Activated B cell treated with CpG ODN at 0.5 μM for 24 hours (primary cell): ENCODE measurements at regions of chr2 and their contacts with region 1.

Region 1: DNA sequence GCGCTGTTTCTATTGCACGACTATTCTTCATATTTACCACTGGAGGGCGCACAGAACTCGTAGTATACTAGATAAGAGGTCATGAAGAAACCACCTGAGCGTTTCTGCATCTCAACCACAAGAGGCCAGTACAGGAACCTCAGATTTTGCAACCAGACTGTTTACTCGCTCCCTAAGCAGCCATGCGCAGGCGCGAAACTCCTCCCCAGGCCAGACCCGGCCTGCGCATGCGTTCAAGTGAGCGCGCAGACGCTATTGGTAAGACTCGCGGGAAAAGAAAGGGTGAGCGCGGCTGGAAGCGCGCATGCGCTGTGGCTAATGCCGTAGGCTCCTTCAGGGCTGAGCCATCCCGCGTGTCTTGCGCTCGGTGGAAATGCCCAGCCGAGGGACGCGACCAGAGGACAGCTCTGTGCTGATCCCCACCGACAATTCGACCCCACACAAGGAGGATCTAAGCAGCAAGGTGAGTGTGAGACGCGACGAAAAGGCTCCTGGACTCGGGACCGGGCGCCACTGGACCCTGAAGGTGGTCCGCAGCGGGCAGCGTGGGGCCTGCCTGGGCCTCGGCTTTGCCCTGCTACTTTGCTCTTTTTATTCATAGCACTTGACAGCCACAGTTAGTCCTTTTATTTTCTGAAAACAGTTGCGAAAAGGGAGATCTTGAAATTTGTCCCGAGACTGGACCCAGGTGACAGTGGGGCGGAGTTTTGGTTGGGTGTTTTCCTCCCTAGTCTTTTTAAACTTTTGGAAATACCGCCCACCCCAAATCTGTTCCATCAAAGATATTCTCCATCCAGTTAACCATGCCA is at the start of gene ASNSD1:
- DNase-seq: peak; percentile 97
- ATAC-seq: peak; percentile 95
- H3K4me3 Mint-ChIP-seq: no peak within 1 kb of the TSS
- H3K27ac Mint-ChIP-seq: no peak within 1 kb of the TSS
- H3K4me1 Mint-ChIP-seq: peaks cover 25% of the 10 kb centered on the region
- H3K27me3 Mint-ChIP-seq: no peaks in the 10 kb centered on the region
- CTCF ChIP-seq: peak; percentile 97
- total RNA-seq, gene ASNSD1: 27.5 and 31.1 TPM in 2 replicates

Region 2: GRCh38 chr2:189199797-189200196 is 461.6 kb before region 1 on chr2:
- CTCF ChIA-PET with region 1: no interaction called
- POLR2A ChIA-PET with region 1: no interaction called
- intact Hi-C with region 1: no loop called
- DNase-seq: no peak
- ATAC-seq: no peak
- H3K4me3 Mint-ChIP-seq: no peak overlapping the region
- H3K27ac Mint-ChIP-seq: no peak overlapping the region
- H3K4me1 Mint-ChIP-seq: no peaks in the 10 kb centered on the region
- H3K27me3 Mint-ChIP-seq: no peaks in the 10 kb centered on the region
- CTCF ChIP-seq: no peak

Region 3: DNA sequence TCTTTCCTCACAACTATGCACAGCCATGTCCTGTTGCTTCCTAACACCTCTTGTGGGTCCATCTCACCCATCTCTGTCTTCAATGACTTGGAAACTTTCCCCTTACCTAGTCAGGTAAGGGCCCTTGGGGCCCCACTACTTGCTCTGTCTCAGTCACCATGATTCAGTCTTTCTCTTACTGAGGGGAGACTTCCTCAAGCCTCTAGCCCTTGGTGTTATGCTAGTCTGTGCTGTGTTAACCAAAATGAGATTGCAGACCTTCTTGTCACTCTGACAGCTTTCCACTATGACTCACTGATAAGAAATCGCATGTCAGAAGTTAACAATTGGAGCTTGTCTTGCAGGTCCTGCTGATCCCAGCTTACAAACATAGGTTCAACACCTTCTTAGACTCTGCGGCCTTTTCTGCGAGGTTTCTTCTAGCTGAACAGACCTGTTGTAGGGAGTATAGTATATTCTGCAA is 154.8 kb before region 1 on chr2:
- CTCF ChIA-PET with region 1: no interaction called
- POLR2A ChIA-PET with region 1: no interaction called
- intact Hi-C with region 1: no loop called
- DNase-seq: no peak
- ATAC-seq: no peak
- H3K4me3 Mint-ChIP-seq: no peak overlapping the region
- H3K27ac Mint-ChIP-seq: no peak overlapping the region
- H3K4me1 Mint-ChIP-seq: no peaks in the 10 kb centered on the region
- H3K27me3 Mint-ChIP-seq: peaks cover 2% of the 10 kb centered on the region
- CTCF ChIP-seq: no peak

Region 4: DNA sequence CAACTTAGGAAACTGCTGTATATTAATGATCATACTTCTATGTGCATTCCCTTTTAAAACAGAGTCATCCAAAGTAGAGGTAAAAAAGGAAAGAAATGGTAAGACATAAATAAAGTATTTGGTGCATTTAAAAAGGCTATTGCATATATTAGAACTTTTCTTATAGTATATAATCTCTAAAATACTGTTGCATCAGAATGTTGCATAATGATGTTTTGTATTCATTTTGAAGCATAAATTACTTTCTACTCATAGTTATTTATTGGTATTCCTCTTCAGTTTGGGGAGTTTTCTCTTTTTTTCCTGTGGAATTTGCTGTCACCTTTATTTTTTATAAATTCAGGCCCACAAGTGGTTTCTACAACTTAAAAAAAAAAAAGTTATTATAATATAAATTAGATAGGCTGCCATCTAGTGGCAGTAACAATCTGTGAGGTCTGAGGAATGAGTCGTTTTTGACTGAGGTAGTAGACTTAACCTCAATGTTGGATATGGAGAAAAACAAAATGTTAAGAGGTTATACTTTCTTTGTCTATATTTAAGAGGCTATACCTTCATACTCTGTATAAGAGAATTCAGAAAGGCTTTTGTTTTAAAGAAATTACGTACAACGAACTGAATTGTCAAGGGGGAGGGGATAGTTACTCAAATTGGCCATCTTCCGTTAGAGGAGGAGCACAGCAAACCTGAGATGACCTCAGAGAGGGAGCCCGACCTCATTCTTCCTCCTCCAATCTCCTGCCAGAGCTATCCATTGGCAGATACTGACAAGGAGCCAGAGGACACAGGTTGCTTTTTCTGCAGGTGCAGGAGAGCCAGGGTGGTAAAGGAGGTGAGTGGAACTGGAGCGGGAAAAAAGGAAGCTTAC is 36.9 kb after region 1 on chr2:
- CTCF ChIA-PET with region 1: interaction called, 47 read pairs
- POLR2A ChIA-PET with region 1: interaction called, 4 read pairs
- intact Hi-C with region 1: loop called (anchors 1 kb)
- DNase-seq: no peak
- ATAC-seq: peak; percentile 58
- H3K4me3 Mint-ChIP-seq: no peak overlapping the region
- H3K27ac Mint-ChIP-seq: no peak overlapping the region
- H3K4me1 Mint-ChIP-seq: peaks cover 2% of the 10 kb centered on the region
- H3K27me3 Mint-ChIP-seq: no peaks in the 10 kb centered on the region
- CTCF ChIP-seq: no peak

Region 5: DNA sequence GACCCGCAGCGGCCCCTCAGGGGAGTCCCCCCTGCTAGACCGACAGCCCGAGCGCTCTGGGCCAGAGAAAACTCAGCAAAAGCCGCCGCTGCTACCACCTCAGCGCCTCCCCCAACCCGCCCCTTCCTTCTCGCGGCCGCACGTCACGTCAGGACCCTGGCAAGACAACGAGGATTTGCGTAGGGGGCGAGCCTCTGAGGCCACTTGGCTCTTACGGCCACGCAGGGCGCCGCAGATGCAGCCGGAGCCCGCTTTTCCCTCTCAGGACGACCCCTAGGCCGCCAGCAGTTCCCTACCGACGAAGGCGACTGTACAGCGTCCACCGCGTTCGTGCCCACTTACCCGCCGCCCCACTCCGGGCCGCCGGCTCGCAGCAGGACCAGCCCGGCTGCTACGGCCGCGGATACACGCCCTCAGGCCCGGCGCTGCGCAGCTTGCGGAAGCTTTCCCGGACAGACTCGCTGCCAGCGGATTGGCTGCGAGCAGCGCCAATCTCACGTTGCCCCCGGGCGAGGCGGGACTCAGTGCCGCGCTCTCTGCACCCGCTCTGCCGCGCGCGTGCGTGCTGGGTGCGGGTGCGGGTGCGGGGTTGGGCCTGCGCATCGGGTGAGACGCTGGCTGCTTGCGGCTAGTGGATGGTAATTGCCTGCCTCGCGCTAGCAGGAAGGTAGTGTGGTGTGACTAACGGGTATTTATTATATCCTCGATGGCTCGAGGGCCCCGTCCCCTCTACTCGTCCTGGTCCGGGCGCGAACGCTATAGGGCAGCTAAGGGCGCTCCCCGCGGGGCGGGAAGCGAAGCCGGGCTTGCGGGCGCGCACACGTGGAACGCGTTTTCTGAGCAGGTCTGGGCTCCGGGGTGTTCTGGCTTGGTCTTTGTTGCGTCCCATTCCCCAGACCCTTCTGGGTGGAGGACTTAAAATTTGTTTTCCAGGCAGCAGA is 122.8 kb after region 1 on chr2 and contains the starts of genes ORMDL1 and PMS1:
- CTCF ChIA-PET with region 1: no interaction called
- POLR2A ChIA-PET with region 1: interaction called, 5 read pairs
- intact Hi-C with region 1: loop called (anchors 1 kb)
- DNase-seq: peak; percentile 95
- ATAC-seq: peak; percentile 90
- H3K4me3 Mint-ChIP-seq: peak within 1 kb of the TSS; percentile 94
- H3K27ac Mint-ChIP-seq: peak within 1 kb of the TSS; percentile 96
- H3K4me1 Mint-ChIP-seq: peaks cover 45% of the 10 kb centered on the region
- H3K27me3 Mint-ChIP-seq: no peaks in the 10 kb centered on the region
- CTCF ChIP-seq: no peak
- total RNA-seq, gene ORMDL1: 80.5 and 92.6 TPM in 2 replicates
- total RNA-seq, gene PMS1: 32.7 and 39.0 TPM in 2 replicates

Region 6: DNA sequence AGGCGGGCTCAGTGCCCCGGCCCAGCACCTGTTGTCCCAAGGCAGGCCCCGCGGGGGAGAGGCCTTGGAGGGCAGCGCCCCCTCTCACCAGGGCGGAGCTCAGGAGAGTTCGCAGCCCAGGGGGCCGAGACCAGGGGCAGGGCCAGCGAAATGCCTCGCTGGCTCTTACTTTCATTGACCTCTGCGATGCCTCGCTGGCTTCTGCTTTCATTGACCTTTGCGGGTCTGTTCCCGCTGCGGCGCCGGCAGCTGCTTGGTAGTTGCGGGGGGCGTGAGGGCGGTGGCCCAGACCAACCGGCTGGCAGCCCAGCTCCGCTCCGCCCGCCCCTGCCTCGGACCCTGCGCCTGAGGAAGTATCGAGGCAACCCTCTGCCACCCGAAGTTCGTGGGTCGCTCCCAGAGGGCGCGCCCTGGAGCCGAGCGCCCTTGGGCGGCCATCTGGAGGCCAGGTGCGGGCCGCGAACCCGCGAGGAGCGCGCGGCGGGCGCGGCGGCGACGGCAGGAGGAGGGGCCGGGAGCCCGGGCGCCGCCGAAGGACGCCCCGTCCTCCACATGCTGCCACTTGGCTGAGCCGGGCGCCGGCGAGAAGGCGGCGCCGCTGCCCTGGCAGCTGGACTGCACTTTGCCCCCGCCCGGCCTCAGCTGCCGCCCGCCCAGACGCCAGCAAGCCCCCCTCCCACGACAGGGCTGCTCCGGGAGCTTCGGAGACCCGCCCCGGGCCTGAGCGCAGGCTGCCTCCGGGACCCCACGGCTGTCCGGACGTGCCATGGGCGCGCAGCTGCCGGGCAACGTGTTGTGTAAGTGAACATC is 519.2 kb after region 1 on chr2:
- CTCF ChIA-PET with region 1: no interaction called
- POLR2A ChIA-PET with region 1: no interaction called
- intact Hi-C with region 1: loop called (anchors 5 kb)
- DNase-seq: peak; percentile 54
- ATAC-seq: peak; percentile 86
- H3K4me3 Mint-ChIP-seq: peak overlapping the region; percentile 82
- H3K27ac Mint-ChIP-seq: no peak overlapping the region
- H3K4me1 Mint-ChIP-seq: peaks cover 20% of the 10 kb centered on the region
- H3K27me3 Mint-ChIP-seq: no peaks in the 10 kb centered on the region
- CTCF ChIP-seq: no peak

Region 7: DNA sequence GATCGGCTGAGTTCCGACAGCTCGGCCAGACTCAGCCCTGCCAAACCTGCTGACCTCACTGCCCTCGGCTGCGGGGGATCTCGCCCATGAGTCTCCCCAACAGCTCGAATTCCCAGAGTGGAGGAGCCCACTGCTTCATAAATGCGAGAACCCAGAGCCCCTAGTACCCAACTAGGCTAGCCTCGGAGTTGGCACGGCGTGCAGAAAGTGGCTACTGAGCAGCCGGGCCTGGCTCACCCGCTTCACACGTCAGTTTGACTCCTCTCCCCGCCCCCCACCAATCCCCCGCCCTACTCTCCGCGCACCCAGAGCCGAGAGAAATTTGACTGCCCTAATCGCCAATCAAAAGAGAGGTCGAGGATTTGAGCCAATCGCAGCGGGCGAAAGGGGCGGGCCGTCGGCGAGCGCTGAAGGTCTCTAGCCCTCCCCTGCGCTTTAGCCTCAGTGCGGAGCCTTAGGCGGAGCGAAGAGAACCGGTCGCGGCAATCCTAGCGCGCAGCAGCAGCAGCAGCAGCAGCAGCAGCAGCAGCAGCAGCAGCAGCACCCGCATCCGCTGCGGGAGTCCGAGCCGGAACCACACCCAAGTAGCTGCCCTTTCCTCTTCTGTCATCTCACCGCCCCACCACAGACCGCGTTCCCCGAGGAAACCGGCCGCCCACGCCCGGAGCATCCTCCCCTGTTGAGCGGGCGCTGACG is 1219.2 kb after region 1 on chr2 and contains the start of gene GLS:
- CTCF ChIA-PET with region 1: no interaction called
- POLR2A ChIA-PET with region 1: interaction called, 4 read pairs
- intact Hi-C with region 1: loop called (anchors 2 kb)
- DNase-seq: peak; percentile 90
- ATAC-seq: peak; percentile 82
- H3K4me3 Mint-ChIP-seq: peak within 1 kb of the TSS; percentile 97
- H3K27ac Mint-ChIP-seq: peak within 1 kb of the TSS; percentile 97
- H3K4me1 Mint-ChIP-seq: peaks cover 44% of the 10 kb centered on the region
- H3K27me3 Mint-ChIP-seq: no peaks in the 10 kb centered on the region
- CTCF ChIP-seq: no peak
- total RNA-seq, gene GLS: 212 and 255 TPM in 2 replicates